IMR-90 (cell line): ENCODE measurements at regions of chr7 and their contacts with region 1.

Region 1: GRCh38 chr7:128209229-128210035 is 31.6 kb upstream of the LEP start:
- DNase-seq: peak; percentile 69
- ATAC-seq: peak; percentile 93
- H3K4me3 ChIP-seq: no peak overlapping the region
- H3K27ac ChIP-seq: no peak overlapping the region
- H3K4me1 ChIP-seq: no peaks in the 10 kb centered on the region
- H3K27me3 ChIP-seq: peaks cover 55% of the 10 kb centered on the region
- CTCF ChIP-seq: peak; percentile 99
- POLR2A ChIP-seq: peak; percentile 64
- RAD21 ChIP-seq: peak; percentile 100

Region 2: DNA sequence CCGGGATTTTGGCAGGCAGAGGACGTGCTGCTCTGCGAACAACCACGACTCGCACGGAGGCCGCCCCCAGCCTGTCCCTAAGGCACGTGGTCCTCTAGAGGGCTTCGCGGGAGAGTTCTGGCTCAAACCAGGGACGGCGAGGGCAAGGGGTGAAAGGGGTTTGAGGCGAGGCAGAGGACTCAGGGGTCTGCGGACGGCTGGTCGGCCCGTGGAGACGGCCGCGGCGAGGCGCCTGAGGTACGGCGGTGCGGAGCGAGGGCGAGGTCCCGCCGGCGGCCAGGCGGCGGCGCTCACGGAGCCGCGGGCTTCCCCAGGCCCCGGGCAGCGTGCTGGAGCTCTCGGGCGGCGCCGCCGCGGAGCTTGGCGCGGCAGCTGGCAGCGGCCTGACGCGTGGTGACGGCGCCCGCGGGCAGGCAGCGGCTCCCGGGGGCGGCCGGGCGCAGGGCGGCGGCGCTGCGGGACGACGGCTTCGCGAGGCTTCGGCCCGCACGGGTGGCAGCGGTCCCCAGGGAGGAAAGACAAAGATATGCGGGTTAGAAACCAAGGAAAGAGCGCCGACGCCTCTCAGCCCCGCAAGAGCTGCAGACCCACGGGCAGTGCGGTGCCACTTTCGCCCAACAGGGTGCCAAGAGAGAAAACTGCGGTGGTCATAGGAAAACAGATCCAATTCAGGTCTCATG is 861.7 kb before region 1 on chr7:
- CTCF ChIA-PET with region 1: interaction called, 3 read pairs
- POLR2A ChIA-PET with region 1: no interaction called
- dilution Hi-C with region 1: no loop called
- in situ Hi-C with region 1: no loop called
- intact Hi-C with region 1: loop called (anchors 5 kb)
- DNase-seq: peak; percentile 61
- ATAC-seq: peak; percentile 100
- H3K4me3 ChIP-seq: peak overlapping the region; percentile 33
- H3K27ac ChIP-seq: no peak overlapping the region
- H3K4me1 ChIP-seq: no peaks in the 10 kb centered on the region
- H3K27me3 ChIP-seq: no peaks in the 10 kb centered on the region
- CTCF ChIP-seq: peak; percentile 74
- POLR2A ChIP-seq: no peak
- RAD21 ChIP-seq: peak; percentile 56

Region 3: DNA sequence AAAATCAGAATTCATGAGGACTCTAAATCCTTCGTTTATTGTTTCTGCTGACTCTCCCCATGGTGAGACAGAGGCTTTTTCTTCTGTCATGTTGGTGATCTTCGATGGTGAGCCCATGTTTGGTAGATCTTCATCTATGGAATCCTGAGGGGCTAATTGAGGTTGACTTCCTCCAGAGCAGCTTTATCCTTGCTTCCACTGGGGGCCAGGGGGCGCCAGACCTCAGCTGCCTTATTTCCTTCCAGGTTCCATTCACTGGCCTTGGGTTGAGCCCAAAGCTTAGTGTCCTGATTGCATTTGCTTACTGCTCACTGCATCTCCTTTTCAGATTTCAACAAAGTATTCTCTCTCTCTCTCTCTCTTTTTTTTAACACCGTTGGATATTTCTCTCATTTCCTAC is 704.7 kb before region 1 on chr7:
- CTCF ChIA-PET with region 1: interaction called, 3 read pairs
- POLR2A ChIA-PET with region 1: no interaction called
- dilution Hi-C with region 1: no loop called
- in situ Hi-C with region 1: no loop called
- intact Hi-C with region 1: loop called (anchors 10 kb)
- DNase-seq: peak; percentile 4
- ATAC-seq: no peak; the same call in 1 of the 2 replicates
- H3K4me3 ChIP-seq: no peak overlapping the region
- H3K27ac ChIP-seq: no peak overlapping the region
- H3K4me1 ChIP-seq: no peaks in the 10 kb centered on the region
- H3K27me3 ChIP-seq: no peaks in the 10 kb centered on the region
- CTCF ChIP-seq: peak; percentile 48
- POLR2A ChIP-seq: no peak
- RAD21 ChIP-seq: peak; percentile 46

Region 4: GRCh38 chr7:127708788-127709187 is 500.6 kb before region 1 on chr7:
- CTCF ChIA-PET with region 1: interaction called, 14 read pairs
- POLR2A ChIA-PET with region 1: no interaction called
- dilution Hi-C with region 1: no loop called
- in situ Hi-C with region 1: loop called (anchors 5 kb)
- intact Hi-C with region 1: loop called (anchors 1 kb)
- DNase-seq: peak; percentile 86
- ATAC-seq: peak; percentile 64
- H3K4me3 ChIP-seq: no peak overlapping the region
- H3K27ac ChIP-seq: no peak overlapping the region
- H3K4me1 ChIP-seq: peaks cover 6% of the 10 kb centered on the region
- H3K27me3 ChIP-seq: no peaks in the 10 kb centered on the region
- CTCF ChIP-seq: peak; percentile 75
- POLR2A ChIP-seq: no peak
- RAD21 ChIP-seq: peak; percentile 88

Region 5: GRCh38 chr7:128017862-128018845 is 191.3 kb before region 1 on chr7:
- CTCF ChIA-PET with region 1: no interaction called
- POLR2A ChIA-PET with region 1: interaction called, 10 read pairs
- dilution Hi-C with region 1: no loop called
- in situ Hi-C with region 1: no loop called
- intact Hi-C with region 1: no loop called
- DNase-seq: peak; percentile 51
- ATAC-seq: no peak
- H3K4me3 ChIP-seq: no peak overlapping the region
- H3K27ac ChIP-seq: no peak overlapping the region
- H3K4me1 ChIP-seq: peaks cover 11% of the 10 kb centered on the region
- H3K27me3 ChIP-seq: no peaks in the 10 kb centered on the region
- CTCF ChIP-seq: no peak
- POLR2A ChIP-seq: no peak
- RAD21 ChIP-seq: no peak

Region 6: GRCh38 chr7:128135515-128136214 is 73.8 kb before region 1 on chr7:
- CTCF ChIA-PET with region 1: interaction called, 36 read pairs
- POLR2A ChIA-PET with region 1: no interaction called
- dilution Hi-C with region 1: no loop called
- in situ Hi-C with region 1: loop called (anchors 5 kb)
- intact Hi-C with region 1: loop called (anchors 1 kb)
- DNase-seq: peak; percentile 37
- ATAC-seq: peak; percentile 97
- H3K4me3 ChIP-seq: peak overlapping the region; percentile 61
- H3K27ac ChIP-seq: no peak overlapping the region; the same call in 1 of the 2 replicates
- H3K4me1 ChIP-seq: peaks cover 2% of the 10 kb centered on the region; the same call in 1 of the 2 replicates
- H3K27me3 ChIP-seq: peaks cover 52% of the 10 kb centered on the region
- CTCF ChIP-seq: peak; percentile 80
- POLR2A ChIP-seq: no peak
- RAD21 ChIP-seq: peak; percentile 68